BJ (cell line): ENCODE measurements at regions of chr3 and their contacts with region 1.

Region 1: GRCh38 chr3:57158813-57159738 is 6.1 kb downstream of the IL17RD start:
- DNase-seq: no peak
- H3K4me3 ChIP-seq: no peak overlapping the region
- H3K27me3 ChIP-seq: peaks cover 20% of the 10 kb centered on the region
- CTCF ChIP-seq: no peak

Region 2: GRCh38 chr3:56923521-56924224 is 235.4 kb before region 1 on chr3:
- CTCF ChIA-PET with region 1: no interaction called
- POLR2A ChIA-PET with region 1: no interaction called
- DNase-seq: no peak
- H3K4me3 ChIP-seq: no peak overlapping the region
- H3K27me3 ChIP-seq: no peaks in the 10 kb centered on the region
- CTCF ChIP-seq: no peak

Region 3: DNA sequence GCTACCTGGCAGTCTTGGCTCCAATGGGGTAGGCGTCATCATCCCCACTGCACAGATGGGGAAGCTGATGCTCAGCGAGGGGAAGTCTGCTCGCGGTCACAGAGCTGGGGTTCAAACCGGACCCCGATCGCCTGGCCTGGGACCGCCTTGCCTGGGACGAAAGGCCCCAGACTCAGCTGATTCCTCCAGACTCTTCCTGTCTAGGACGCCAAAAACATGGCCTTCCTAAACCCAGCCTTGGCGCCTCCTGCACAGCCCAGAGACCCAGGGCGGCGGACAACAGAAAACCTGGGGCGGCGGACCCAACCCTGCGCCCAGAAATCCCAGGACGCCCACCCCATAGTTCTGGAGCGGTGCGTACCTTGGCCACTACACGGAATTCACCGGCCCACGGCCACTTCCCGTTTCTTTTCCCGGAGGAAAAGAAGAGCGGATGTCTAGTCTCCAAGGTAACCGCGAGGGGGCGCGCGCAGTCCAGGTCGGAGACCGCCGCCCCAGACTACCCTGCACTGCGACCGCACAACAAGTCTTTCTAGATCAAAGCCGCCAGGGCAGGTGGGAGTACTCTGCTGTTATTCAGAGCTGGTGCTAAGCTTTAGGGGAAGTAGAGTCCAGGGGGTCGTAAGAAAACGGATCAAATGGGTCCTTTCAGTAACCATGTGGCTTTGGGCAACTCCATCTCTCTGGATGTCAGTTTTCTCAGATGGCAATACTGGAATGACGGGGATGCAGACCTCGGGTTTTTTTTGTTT is 11.0 kb after region 1 on chr3:
- CTCF ChIA-PET with region 1: interaction called, 30 read pairs
- POLR2A ChIA-PET with region 1: no interaction called
- DNase-seq: no peak
- H3K4me3 ChIP-seq: peak overlapping the region; percentile 45
- H3K27me3 ChIP-seq: peaks cover 11% of the 10 kb centered on the region
- CTCF ChIP-seq: peak; percentile 88